Motor neuron (in vitro differentiated cells): ENCODE measurements at regions of chr1 and their contacts with region 1.

Region 1: GRCh38 chr1:47179017-47179987 is 10.5 kb downstream of the PDZK1IP1 start:
- ATAC-seq: peak; percentile 79 to 95 (median 88)
- H3K4me3 ChIP-seq: peak overlapping the region; percentile 3 to 30 (median 17)
- H3K27ac ChIP-seq: no peak overlapping the region
- H3K4me1 ChIP-seq: no peaks in the 10 kb centered on the region

Region 2: DNA sequence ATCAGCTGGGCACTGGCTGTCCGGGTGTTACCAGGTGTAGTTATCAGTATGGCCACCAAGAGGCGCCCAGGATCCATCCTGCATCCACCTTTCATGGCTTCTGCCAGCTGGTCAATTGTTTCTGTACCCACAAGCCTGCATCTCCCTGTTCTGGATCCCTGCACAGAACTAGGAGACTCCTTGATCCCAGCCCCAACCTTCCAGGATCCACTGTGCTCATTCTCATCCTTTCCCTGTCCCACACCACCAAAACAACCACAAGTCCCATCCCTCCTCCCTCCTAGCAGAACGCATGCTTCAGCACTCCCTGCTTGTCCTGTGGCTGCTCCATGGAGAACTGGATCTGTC is 209.6 kb after region 1 on chr1:
- in situ Hi-C with region 1: loop called in 1 of 9 experiments (anchors 25 kb)
- ATAC-seq: peak; percentile 67 to 96 (median 83)
- H3K4me3 ChIP-seq: no peak overlapping the region
- H3K27ac ChIP-seq: no peak overlapping the region
- H3K4me1 ChIP-seq: no peaks in the 10 kb centered on the region

Region 3: GRCh38 chr1:47424336-47424982 is 245.2 kb after region 1 on chr1:
- in situ Hi-C with region 1: loop called in 3 of 9 experiments (anchors 25 kb)
- ATAC-seq: peak in 6 of 8 experiments; percentile 29 to 98 (median 55)
- H3K4me3 ChIP-seq: no peak overlapping the region
- H3K27ac ChIP-seq: no peak overlapping the region
- H3K4me1 ChIP-seq: no peaks in the 10 kb centered on the region

Region 4: DNA sequence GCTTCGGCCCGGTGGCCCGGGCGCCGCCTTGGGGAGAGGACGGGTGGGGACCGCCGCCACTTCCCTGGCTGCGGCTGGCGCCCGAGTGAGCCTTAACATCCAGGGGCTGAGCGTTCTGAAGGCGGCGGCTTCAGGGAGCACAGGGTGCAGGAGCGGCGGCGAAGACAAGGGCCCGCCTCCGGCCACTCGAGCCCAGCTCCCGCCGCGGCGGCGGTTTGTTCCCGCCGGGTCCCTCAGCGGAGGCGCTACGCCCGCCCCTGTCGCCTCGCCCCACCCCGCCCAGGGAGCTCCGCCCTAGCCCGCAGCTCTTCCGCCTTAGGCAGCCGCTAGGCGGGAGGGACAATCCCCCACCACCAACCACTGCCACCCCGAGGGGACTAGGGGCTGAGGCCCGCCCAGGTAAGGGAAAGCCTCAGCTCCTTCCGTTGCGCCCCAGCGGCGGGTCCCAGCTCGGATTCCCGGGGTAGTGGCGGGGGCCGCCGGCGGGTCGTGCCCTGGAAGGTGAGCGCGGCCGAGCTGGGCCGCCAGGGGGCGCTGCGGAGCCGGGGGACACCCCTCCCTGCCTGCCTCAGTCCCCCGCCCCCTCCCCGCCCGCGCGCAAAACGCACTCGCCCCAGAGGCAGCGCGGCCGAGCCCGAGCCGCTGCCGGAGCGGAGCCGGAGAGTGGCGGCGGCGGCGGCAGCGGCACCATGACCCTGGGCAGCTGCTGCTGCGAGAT is 258.3 kb after region 1 on chr1 and contains the start of gene FOXD2:
- in situ Hi-C with region 1: loop called in 1 of 9 experiments (anchors 25 kb)
- ATAC-seq: peak; percentile 74 to 90 (median 86)
- H3K4me3 ChIP-seq: peak within 1 kb of the TSS; percentile 21 to 61 (median 47)
- H3K27ac ChIP-seq: no peak within 1 kb of the TSS
- H3K4me1 ChIP-seq: peaks cover 2 to 17% of the 10 kb centered on the region in 2 donors
- total RNA-seq, gene FOXD2: 0.05 to 1.6 (median 0.30) TPM in 6 of 8 experiments, not detected in the others

Region 5: DNA sequence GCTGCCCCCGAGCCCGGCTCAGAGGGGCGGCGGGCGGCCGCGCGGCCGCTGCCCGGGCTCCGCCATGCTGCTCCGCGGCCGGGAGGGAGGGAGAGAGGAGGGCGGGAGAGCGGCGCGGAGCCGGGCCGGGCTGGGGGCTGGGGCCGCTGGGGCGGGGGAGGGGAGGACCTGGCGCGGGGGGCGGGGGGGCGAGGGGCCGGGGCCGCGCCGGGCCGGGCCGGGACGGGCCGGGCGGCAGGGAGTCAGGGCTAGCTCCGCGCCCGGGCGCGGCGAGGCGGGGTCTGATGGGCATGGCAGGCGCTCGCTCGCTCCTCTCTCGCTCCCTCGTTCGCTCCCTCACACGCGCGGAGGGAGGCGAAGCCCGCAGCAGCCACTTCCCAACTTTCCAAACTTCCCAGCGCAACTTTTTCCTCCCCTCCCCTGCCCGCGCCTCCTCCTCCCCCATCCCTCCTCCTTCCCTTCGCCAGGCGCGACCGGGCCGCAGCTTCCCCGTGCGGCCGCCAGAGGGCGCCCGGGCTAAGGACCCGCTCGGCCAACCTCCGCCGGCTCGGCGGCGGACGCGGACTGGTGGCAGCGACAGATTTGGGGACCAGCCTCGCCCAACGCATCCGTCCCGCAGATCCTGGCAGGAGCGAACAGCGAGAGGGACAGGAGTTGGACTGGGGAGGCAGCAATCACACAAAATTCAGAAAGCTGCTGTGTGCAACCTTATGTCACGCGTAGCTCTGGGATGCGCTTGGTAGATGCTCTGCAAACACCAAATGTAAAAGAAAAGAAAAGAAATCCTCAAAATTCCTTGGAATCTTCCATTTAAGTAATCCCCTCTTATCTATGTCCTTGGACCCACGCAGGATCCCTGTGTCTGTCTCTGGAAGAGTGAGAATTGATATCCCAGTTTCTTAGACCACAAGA is 818.2 kb after region 1 on chr1 and contains the start of gene TRABD2B:
- in situ Hi-C with region 1: loop called in 1 of 9 experiments (anchors 25 kb)
- ATAC-seq: peak; percentile 63 to 88 (median 84)
- H3K4me3 ChIP-seq: peak within 1 kb of the TSS; percentile 41 to 57 (median 47)
- H3K27ac ChIP-seq: no peak within 1 kb of the TSS
- H3K4me1 ChIP-seq: peaks cover 7 to 14% of the 10 kb centered on the region in 2 donors
- total RNA-seq, gene TRABD2B: 0.11 to 1.1 (median 0.42) TPM